ENCODE measurements at regions of chr2 and their contacts with region 1.

Region 1: GRCh38 chr2:202178342-202178958 is 59.9 kb downstream of the SUMO1 start:
- DNase-seq: no peak
- ATAC-seq: peak; percentile 84
- H3K4me3 ChIP-seq: no peak overlapping the region
- H3K27ac ChIP-seq: no peak overlapping the region
- H3K4me1 ChIP-seq: no peaks in the 10 kb centered on the region
- H3K27me3 ChIP-seq: no peaks in the 10 kb centered on the region
- CTCF ChIP-seq: peak; percentile 88

Region 2: GRCh38 chr2:201860636-201861066 is 317.8 kb before region 1 on chr2:
- intact Hi-C with region 1: loop called (anchors 5 kb)
- DNase-seq: no peak
- ATAC-seq: peak; percentile 80 to 88
- H3K4me3 ChIP-seq: no peak overlapping the region
- H3K27ac ChIP-seq: no peak overlapping the region
- H3K4me1 ChIP-seq: peaks cover 8% of the 10 kb centered on the region
- H3K27me3 ChIP-seq: peaks cover 10% of the 10 kb centered on the region
- CTCF ChIP-seq: peak; percentile 78

Region 3: GRCh38 chr2:202604699-202605098 is 426.2 kb after region 1 on chr2:
- intact Hi-C with region 1: no loop called
- DNase-seq: no peak
- ATAC-seq: no peak
- H3K4me3 ChIP-seq: no peak overlapping the region
- H3K27ac ChIP-seq: no peak overlapping the region
- H3K4me1 ChIP-seq: no peaks in the 10 kb centered on the region
- H3K27me3 ChIP-seq: no peaks in the 10 kb centered on the region
- CTCF ChIP-seq: no peak